ENCODE measurements at regions of chr1 and their contacts with region 1.

Region 1: GRCh38 chr1:147389532-147390524 is 147.3 kb downstream of the CHD1L start:
- DNase-seq: peak; percentile 46
- ATAC-seq: peak; percentile 95
- H3K4me3 ChIP-seq: no peak overlapping the region
- H3K27ac ChIP-seq: no peak overlapping the region
- H3K4me1 ChIP-seq: no peaks in the 10 kb centered on the region
- H3K27me3 ChIP-seq: no peaks in the 10 kb centered on the region; a peak in 1 of 5 replicates
- CTCF ChIP-seq: peak; percentile 84
- EP300 ChIP-seq: no peak
- POLR2A ChIP-seq: no peak
- RAD21 ChIP-seq: no peak

Region 2: GRCh38 chr1:147273409-147274336 is 116.2 kb before region 1 on chr1:
- CTCF ChIA-PET with region 1: interaction called, 10 read pairs
- POLR2A ChIA-PET with region 1: no interaction called
- in situ Hi-C with region 1: loop called (anchors 5 kb)
- intact Hi-C with region 1: no loop called
- DNase-seq: peak; percentile 56
- ATAC-seq: peak; percentile 36; the same call in 2 of the 3 replicates
- H3K4me3 ChIP-seq: no peak overlapping the region
- H3K27ac ChIP-seq: no peak overlapping the region
- H3K4me1 ChIP-seq: no peaks in the 10 kb centered on the region
- H3K27me3 ChIP-seq: no peaks in the 10 kb centered on the region
- CTCF ChIP-seq: peak; percentile 54
- EP300 ChIP-seq: no peak
- POLR2A ChIP-seq: no peak
- RAD21 ChIP-seq: no peak

Region 3: DNA sequence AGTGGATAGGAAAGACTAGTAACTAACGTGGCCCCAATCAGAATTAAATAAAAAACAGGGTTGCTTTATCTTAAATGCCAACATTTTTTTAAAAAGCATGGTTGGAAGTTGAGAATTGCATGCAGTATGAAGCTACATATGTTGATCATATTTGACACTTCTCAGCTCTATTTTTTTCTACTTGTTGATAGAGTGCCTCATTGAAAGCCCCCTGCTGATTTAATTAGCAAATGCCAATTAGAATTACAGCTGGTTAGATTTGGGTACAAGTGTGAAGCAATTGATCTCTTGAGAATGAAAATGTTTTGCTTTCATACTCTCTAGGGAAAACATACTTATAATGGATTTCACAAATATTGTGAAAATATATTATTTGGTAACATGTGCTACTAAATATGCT is 106.8 kb before region 1 on chr1:
- CTCF ChIA-PET with region 1: no interaction called
- POLR2A ChIA-PET with region 1: no interaction called
- in situ Hi-C with region 1: no loop called
- intact Hi-C with region 1: loop called (anchors 1 kb)
- DNase-seq: no peak
- ATAC-seq: no peak
- H3K4me3 ChIP-seq: no peak overlapping the region
- H3K27ac ChIP-seq: no peak overlapping the region
- H3K4me1 ChIP-seq: no peaks in the 10 kb centered on the region
- H3K27me3 ChIP-seq: no peaks in the 10 kb centered on the region
- CTCF ChIP-seq: no peak
- EP300 ChIP-seq: no peak
- POLR2A ChIP-seq: no peak
- RAD21 ChIP-seq: no peak

Region 4: DNA sequence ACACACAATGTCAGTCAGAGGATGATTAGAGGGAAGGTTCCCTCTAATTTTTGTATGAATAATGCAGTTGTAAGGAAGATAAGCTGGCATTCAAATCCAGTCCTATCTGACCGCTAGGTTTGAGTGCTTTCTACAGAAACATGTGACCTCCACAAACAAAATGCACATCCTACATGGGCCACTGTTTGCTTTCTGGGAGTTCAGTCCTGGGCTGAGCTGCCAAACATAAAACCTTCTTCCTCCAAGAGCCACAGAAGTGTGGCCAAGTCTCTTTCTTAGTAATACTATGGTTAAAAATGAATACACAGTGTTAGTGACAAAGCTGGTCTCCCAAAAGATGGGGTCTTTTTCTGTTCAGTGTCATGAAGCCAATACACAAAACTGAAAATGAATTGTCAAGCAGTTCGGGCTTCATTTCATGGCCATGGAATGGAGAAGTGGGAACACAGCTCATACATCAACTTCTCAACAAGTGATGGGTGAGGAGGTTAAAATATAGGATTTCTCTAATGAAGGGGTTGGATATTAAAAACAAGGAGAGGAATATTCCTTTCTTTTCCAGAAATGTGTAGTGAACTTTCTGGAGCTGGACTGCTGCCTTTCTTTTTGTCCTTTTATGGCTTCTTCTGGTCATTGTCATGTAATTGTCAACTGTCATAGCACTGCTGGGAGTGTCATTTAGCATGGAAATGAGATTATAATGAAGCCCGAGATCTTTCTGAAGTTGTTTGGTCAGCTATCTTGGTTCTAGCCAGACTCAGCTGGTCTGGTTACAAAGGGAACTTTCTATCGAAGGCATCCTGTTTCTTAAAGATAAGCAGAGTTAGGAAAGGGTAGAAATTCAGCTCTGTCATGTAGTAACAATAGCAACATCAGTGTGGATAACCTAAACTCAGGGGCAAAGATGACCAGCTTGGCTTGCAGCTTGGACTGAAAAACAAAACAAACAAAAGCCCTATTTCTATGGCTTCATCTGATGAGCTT is 12.3 kb before region 1 on chr1:
- CTCF ChIA-PET with region 1: no interaction called
- POLR2A ChIA-PET with region 1: no interaction called
- in situ Hi-C with region 1: no loop called
- intact Hi-C with region 1: no loop called
- DNase-seq: no peak
- ATAC-seq: no peak; the same call in 2 of the 3 replicates
- H3K4me3 ChIP-seq: no peak overlapping the region
- H3K27ac ChIP-seq: no peak overlapping the region
- H3K4me1 ChIP-seq: no peaks in the 10 kb centered on the region
- H3K27me3 ChIP-seq: 0 out of 5 replicates have a peak, but pooled peaks cover 0 to 1% of the 10 kb centered on the region in 2 experiments
- CTCF ChIP-seq: no peak
- EP300 ChIP-seq: no peak
- POLR2A ChIP-seq: no peak
- RAD21 ChIP-seq: no peak

Region 5: DNA sequence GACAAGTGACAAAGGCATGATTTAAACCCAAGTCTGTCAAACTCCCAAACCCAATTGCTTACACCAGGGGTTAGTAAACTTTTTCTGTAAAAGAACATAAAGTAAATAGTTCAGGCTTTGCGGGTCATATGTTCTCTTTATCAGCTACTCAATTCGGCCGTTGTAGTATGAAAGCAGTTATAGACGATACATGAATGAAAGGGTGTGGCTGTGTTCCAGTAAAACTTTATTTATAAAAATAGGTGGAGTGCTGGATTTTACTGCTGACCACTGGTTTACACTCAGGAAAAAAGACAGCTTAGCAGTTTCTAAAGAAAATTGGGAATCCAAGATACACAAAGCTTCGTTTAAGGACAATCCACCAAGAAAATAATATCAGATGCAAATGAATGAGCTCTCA is 27.2 kb after region 1 on chr1:
- CTCF ChIA-PET with region 1: no interaction called
- POLR2A ChIA-PET with region 1: no interaction called
- in situ Hi-C with region 1: no loop called
- intact Hi-C with region 1: no loop called
- DNase-seq: no peak
- ATAC-seq: no peak
- H3K4me3 ChIP-seq: no peak overlapping the region
- H3K27ac ChIP-seq: no peak overlapping the region
- H3K4me1 ChIP-seq: no peaks in the 10 kb centered on the region
- H3K27me3 ChIP-seq: no peaks in the 10 kb centered on the region
- CTCF ChIP-seq: no peak
- EP300 ChIP-seq: no peak
- POLR2A ChIP-seq: no peak
- RAD21 ChIP-seq: no peak

Measured in HepG2 (cell line).